Naive thymus-derived CD4-positive, alpha-beta T cell (primary cell): ENCODE measurements at regions of chr4 and their contacts with region 1.

Region 1: DNA sequence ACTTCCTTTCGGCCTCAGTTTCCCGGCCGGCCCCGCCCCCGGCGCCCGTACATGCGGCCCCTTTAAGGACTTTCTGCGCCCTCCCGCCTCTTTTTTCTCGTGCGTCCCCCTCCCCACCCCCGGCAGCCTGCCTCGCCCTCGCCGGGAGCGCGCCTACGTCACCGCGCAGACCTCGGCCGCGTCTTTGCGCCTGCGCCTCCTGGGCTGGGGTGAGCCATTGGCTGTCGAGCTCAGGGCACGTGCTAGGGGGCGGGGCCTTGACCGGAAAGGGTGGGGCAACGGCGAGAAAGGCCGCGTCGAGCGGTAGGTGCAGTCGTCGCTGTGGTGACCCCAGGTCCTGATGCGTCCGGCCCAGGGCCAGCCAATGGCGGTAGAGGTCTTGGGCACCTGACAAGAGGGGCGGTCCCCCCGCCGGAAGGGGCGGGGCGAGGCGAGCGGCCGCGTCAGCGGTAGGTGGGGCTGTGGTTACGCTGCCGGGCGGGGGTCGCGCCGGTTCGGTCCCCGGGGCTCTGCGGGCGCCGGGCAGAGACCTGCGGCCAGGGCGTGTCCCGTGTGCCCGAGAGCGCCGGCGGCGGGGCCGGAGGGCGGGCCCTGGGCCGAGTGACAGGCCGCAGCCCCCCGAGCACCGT is at the start of gene UVSSA:
- DNase-seq: peak; percentile 100
- ATAC-seq: peak; percentile 96
- H3K4me3 ChIP-seq: peak within 1 kb of the TSS; percentile 87
- H3K4me3 Mint-ChIP-seq: peak within 1 kb of the TSS; percentile 86 to 99 (median 95)
- H3K27ac ChIP-seq: peak within 1 kb of the TSS; percentile 94
- H3K27ac Mint-ChIP-seq: peak within 1 kb of the TSS; percentile 83 to 99 (median 95)
- H3K4me1 ChIP-seq: peaks cover 14 to 19% of the 10 kb centered on the region in 2 donors
- H3K4me1 Mint-ChIP-seq: peaks cover 34 to 53% (median 42%) of the 10 kb centered on the region in 7 donors
- H3K27me3 ChIP-seq: no peaks in the 10 kb centered on the region
- H3K27me3 Mint-ChIP-seq: no peaks in the 10 kb centered on the region
- total RNA-seq, gene UVSSA: 29.5 to 44.1 (median 39.7) TPM

Region 2: GRCh38 chr4:705278-706082 is 641.4 kb before region 1 on chr4 and contains the start of gene PCGF3:
- CTCF ChIA-PET with region 1: no interaction called
- POLR2A ChIA-PET with region 1: no interaction called
- intact Hi-C with region 1: loop called in 1 of 2 experiments (anchors 1 kb)
- DNase-seq: peak; percentile 89 to 99 (median 92)
- ATAC-seq: peak; percentile 99
- H3K4me3 ChIP-seq: peak within 1 kb of the TSS; percentile 84
- H3K4me3 Mint-ChIP-seq: peak within 1 kb of the TSS; percentile 68 to 96 (median 83)
- H3K27ac ChIP-seq: peak within 1 kb of the TSS; percentile 96
- H3K27ac Mint-ChIP-seq: peak within 1 kb of the TSS; percentile 40 to 93 (median 59)
- H3K4me1 ChIP-seq: peaks cover 9 to 11% of the 10 kb centered on the region in 2 donors
- H3K4me1 Mint-ChIP-seq: peaks cover 21 to 30% (median 23%) of the 10 kb centered on the region in 7 donors
- H3K27me3 ChIP-seq: no peaks in the 10 kb centered on the region
- H3K27me3 Mint-ChIP-seq: no peaks in the 10 kb centered on the region
- total RNA-seq, gene PCGF3: 32.7 to 66.8 (median 42.3) TPM

Region 3: DNA sequence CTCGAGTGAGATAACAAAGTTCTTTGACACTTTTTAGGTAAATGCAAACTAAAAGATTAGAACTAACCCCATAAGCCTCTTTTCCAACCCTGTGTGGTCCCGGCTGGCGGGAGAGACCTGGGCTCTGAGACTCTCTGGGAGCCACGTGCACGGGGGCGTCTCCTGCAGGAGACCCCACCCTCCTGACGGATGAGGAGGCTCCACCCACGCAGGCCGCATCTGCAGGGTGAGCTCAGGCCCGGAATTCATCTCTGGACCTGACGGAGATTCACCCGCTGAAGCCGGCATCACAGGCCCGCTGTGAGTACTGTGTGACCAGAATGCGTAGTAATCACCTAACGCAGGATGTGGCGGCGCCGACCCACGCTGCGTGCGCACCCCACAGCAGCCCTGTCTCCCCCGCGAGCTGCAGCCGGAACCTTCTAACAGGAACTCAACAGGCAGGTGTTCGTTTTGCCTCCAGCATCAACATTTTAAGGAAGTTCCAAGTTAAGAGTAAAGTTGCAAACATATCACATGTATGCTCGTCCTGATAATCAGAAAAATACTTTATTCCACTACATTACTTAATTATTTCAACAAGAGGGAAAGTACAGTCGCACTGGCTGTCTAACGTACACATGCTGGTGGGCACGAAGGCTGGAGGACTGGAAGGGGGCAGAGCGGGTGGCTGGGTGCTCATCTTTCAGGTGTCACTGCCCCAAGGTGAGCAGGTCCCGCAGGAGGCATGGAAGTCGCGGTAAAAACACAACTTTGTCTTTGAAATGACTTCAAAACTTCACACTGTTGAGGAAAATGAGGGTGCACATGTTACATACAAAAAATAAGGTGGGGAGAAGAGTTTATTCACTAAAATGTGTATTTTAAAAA is 290.9 kb before region 1 on chr4:
- CTCF ChIA-PET with region 1: no interaction called
- POLR2A ChIA-PET with region 1: interaction called, 7 read pairs
- intact Hi-C with region 1: loop called in 1 of 2 experiments (anchors 5 kb)
- DNase-seq: peak; percentile 65 to 93 (median 91)
- ATAC-seq: peak; percentile 96
- H3K4me3 ChIP-seq: peak overlapping the region; percentile 74
- H3K4me3 Mint-ChIP-seq: peak overlapping the region; percentile 74 to 89 (median 85)
- H3K27ac ChIP-seq: peak overlapping the region; percentile 67
- H3K27ac Mint-ChIP-seq: peak overlapping the region; percentile 87 to 98 (median 95)
- H3K4me1 ChIP-seq: peaks cover 13 to 14% of the 10 kb centered on the region in 2 donors
- H3K4me1 Mint-ChIP-seq: peaks cover 8 to 17% (median 10%) of the 10 kb centered on the region in 7 donors
- H3K27me3 ChIP-seq: no peaks in the 10 kb centered on the region
- H3K27me3 Mint-ChIP-seq: peaks cover 0 to 17% (median 0%) of the 10 kb centered on the region in 5 donors

Region 4: GRCh38 chr4:1154523-1155182 is 192.2 kb before region 1 on chr4:
- CTCF ChIA-PET with region 1: no interaction called
- POLR2A ChIA-PET with region 1: no interaction called
- intact Hi-C with region 1: no loop called
- DNase-seq: no peak
- ATAC-seq: no peak
- H3K4me3 ChIP-seq: no peak overlapping the region
- H3K4me3 Mint-ChIP-seq: no peak overlapping the region
- H3K27ac ChIP-seq: no peak overlapping the region
- H3K27ac Mint-ChIP-seq: peak overlapping the region in 1 of 9 donors; percentile 37
- H3K4me1 ChIP-seq: no peaks in the 10 kb centered on the region
- H3K4me1 Mint-ChIP-seq: no peaks in the 10 kb centered on the region
- H3K27me3 ChIP-seq: no peaks in the 10 kb centered on the region
- H3K27me3 Mint-ChIP-seq: peaks cover 15 to 49% (median 22%) of the 10 kb centered on the region in 5 donors

Region 5: GRCh38 chr4:1249148-1249730 is 97.7 kb before region 1 on chr4:
- CTCF ChIA-PET with region 1: interaction called, 11 read pairs
- POLR2A ChIA-PET with region 1: interaction called, 102 read pairs
- intact Hi-C with region 1: loop called in 1 of 2 experiments (anchors 1 kb)
- DNase-seq: peak; percentile 79 to 92 (median 90)
- ATAC-seq: peak; percentile 80
- H3K4me3 ChIP-seq: peak overlapping the region; percentile 82
- H3K4me3 Mint-ChIP-seq: peak overlapping the region; percentile 80 to 93 (median 88)
- H3K27ac ChIP-seq: peak overlapping the region; percentile 97
- H3K27ac Mint-ChIP-seq: peak overlapping the region; percentile 90 to 96 (median 94)
- H3K4me1 ChIP-seq: peaks cover 51 to 66% of the 10 kb centered on the region in 2 donors
- H3K4me1 Mint-ChIP-seq: peaks cover 50 to 74% (median 65%) of the 10 kb centered on the region in 7 donors
- H3K27me3 ChIP-seq: no peaks in the 10 kb centered on the region
- H3K27me3 Mint-ChIP-seq: no peaks in the 10 kb centered on the region

Region 6: GRCh38 chr4:1329408-1330371 is 17.2 kb before region 1 on chr4:
- CTCF ChIA-PET with region 1: interaction called, 6 read pairs
- POLR2A ChIA-PET with region 1: interaction called, 48 read pairs
- intact Hi-C with region 1: loop called (anchors 1 to 2 kb)
- DNase-seq: peak in 7 of 9 donors; percentile 30 to 52 (median 45)
- ATAC-seq: peak; percentile 31
- H3K4me3 ChIP-seq: no peak overlapping the region
- H3K4me3 Mint-ChIP-seq: peak overlapping the region in 7 of 10 donors; percentile 72 to 80 (median 77)
- H3K27ac ChIP-seq: peak overlapping the region; percentile 38
- H3K27ac Mint-ChIP-seq: peak overlapping the region; percentile 74 to 96 (median 92)
- H3K4me1 ChIP-seq: peaks cover 32 to 39% of the 10 kb centered on the region in 2 donors
- H3K4me1 Mint-ChIP-seq: peaks cover 22 to 32% (median 31%) of the 10 kb centered on the region in 7 donors
- H3K27me3 ChIP-seq: no peaks in the 10 kb centered on the region
- H3K27me3 Mint-ChIP-seq: no peaks in the 10 kb centered on the region

Region 7: GRCh38 chr4:1547856-1548826 is 201.2 kb after region 1 on chr4:
- CTCF ChIA-PET with region 1: no interaction called
- POLR2A ChIA-PET with region 1: no interaction called
- intact Hi-C with region 1: no loop called
- DNase-seq: no peak
- ATAC-seq: peak; percentile 1
- H3K4me3 ChIP-seq: no peak overlapping the region
- H3K4me3 Mint-ChIP-seq: peak overlapping the region in 9 of 10 donors; percentile 39 to 74 (median 59)
- H3K27ac ChIP-seq: no peak overlapping the region
- H3K27ac Mint-ChIP-seq: peak overlapping the region in 4 of 9 donors; percentile 70 to 81 (median 78)
- H3K4me1 ChIP-seq: peaks cover 0 to 11% of the 10 kb centered on the region in 2 donors
- H3K4me1 Mint-ChIP-seq: peaks cover 3 to 33% (median 21%) of the 10 kb centered on the region in 7 donors
- H3K27me3 ChIP-seq: no peaks in the 10 kb centered on the region
- H3K27me3 Mint-ChIP-seq: peaks cover 0 to 9% (median 3%) of the 10 kb centered on the region in 5 donors

Region 8: DNA sequence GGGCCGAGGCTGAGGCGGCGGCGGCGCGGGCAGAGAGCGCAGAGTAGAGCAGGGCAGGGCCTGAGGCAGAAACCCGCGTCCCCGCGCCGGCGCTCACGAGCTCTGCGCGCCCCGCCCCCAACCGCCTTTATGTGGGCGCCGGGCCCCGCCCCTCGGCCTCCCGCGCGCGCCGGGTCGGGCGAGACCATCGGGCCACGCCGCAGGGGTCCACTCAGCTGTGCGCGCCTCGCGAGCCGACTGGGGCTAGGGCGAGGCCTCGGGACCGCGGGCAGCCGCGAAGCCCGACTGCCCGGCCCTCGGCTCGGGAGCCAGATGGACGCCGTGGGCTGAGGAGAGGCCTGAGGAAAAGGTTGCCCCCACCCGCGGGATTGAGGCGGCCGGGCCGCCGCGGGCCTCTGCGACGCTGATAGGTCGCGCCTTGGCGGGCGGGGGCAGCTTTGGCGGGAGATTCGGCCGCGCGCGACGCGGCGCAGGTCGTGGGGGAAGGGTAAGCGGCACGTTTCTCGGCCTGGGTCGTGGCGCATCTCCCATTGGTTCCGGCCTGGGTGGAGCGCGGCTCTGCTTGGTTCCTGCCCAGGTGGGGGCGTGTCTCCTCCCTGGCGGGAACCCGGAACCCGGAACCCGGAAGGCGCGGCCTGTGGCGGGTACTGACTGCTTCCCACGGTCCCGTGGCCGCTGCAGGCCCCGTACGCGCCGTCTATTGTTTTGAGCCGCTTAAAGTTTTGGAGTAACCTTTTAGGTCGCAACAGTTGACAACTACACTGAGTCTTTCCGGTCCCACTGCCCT is 365.5 kb after region 1 on chr4 and contains the start of gene SLBP:
- CTCF ChIA-PET with region 1: interaction called, 3 read pairs
- POLR2A ChIA-PET with region 1: interaction called, 4 read pairs
- intact Hi-C with region 1: loop called in 1 of 2 experiments (anchors 1 kb)
- DNase-seq: peak; percentile 98 to 99 (median 98)
- ATAC-seq: peak; percentile 92
- H3K4me3 ChIP-seq: peak within 1 kb of the TSS; percentile 100
- H3K4me3 Mint-ChIP-seq: peak within 1 kb of the TSS; percentile 89 to 98 (median 94)
- H3K27ac ChIP-seq: peak within 1 kb of the TSS; percentile 99
- H3K27ac Mint-ChIP-seq: peak within 1 kb of the TSS; percentile 90 to 98 (median 94)
- H3K4me1 ChIP-seq: peaks cover 32 to 34% of the 10 kb centered on the region in 2 donors
- H3K4me1 Mint-ChIP-seq: peaks cover 11 to 67% (median 59%) of the 10 kb centered on the region in 7 donors
- H3K27me3 ChIP-seq: no peaks in the 10 kb centered on the region
- H3K27me3 Mint-ChIP-seq: no peaks in the 10 kb centered on the region
- total RNA-seq, gene SLBP: 29.5 to 103 (median 30.3) TPM

Region 9: GRCh38 chr4:1939664-1940509 is 593.0 kb after region 1 on chr4:
- CTCF ChIA-PET with region 1: no interaction called
- POLR2A ChIA-PET with region 1: no interaction called
- intact Hi-C with region 1: no loop called
- DNase-seq: no peak
- ATAC-seq: no peak
- H3K4me3 ChIP-seq: no peak overlapping the region
- H3K4me3 Mint-ChIP-seq: no peak overlapping the region
- H3K27ac ChIP-seq: no peak overlapping the region
- H3K27ac Mint-ChIP-seq: no peak overlapping the region
- H3K4me1 ChIP-seq: no peaks in the 10 kb centered on the region
- H3K4me1 Mint-ChIP-seq: peaks cover 0 to 6% (median 0%) of the 10 kb centered on the region in 7 donors
- H3K27me3 ChIP-seq: no peaks in the 10 kb centered on the region
- H3K27me3 Mint-ChIP-seq: no peaks in the 10 kb centered on the region

Region 10: GRCh38 chr4:2262143-2262943 is 915.4 kb after region 1 on chr4:
- CTCF ChIA-PET with region 1: no interaction called
- POLR2A ChIA-PET with region 1: no interaction called
- intact Hi-C with region 1: loop called in 1 of 2 experiments (anchors 2 kb)
- DNase-seq: peak; percentile 95 to 99 (median 98)
- ATAC-seq: peak; percentile 93
- H3K4me3 ChIP-seq: peak overlapping the region; percentile 69
- H3K4me3 Mint-ChIP-seq: peak overlapping the region; percentile 61 to 85 (median 76)
- H3K27ac ChIP-seq: peak overlapping the region; percentile 95
- H3K27ac Mint-ChIP-seq: peak overlapping the region; percentile 61 to 87 (median 83)
- H3K4me1 ChIP-seq: peaks cover 8 to 23% of the 10 kb centered on the region in 2 donors
- H3K4me1 Mint-ChIP-seq: peaks cover 0 to 11% (median 0%) of the 10 kb centered on the region in 7 donors
- H3K27me3 ChIP-seq: no peaks in the 10 kb centered on the region
- H3K27me3 Mint-ChIP-seq: no peaks in the 10 kb centered on the region